ENCODE measurements at regions of chr11 and their contacts with region 1.

Region 1: DNA sequence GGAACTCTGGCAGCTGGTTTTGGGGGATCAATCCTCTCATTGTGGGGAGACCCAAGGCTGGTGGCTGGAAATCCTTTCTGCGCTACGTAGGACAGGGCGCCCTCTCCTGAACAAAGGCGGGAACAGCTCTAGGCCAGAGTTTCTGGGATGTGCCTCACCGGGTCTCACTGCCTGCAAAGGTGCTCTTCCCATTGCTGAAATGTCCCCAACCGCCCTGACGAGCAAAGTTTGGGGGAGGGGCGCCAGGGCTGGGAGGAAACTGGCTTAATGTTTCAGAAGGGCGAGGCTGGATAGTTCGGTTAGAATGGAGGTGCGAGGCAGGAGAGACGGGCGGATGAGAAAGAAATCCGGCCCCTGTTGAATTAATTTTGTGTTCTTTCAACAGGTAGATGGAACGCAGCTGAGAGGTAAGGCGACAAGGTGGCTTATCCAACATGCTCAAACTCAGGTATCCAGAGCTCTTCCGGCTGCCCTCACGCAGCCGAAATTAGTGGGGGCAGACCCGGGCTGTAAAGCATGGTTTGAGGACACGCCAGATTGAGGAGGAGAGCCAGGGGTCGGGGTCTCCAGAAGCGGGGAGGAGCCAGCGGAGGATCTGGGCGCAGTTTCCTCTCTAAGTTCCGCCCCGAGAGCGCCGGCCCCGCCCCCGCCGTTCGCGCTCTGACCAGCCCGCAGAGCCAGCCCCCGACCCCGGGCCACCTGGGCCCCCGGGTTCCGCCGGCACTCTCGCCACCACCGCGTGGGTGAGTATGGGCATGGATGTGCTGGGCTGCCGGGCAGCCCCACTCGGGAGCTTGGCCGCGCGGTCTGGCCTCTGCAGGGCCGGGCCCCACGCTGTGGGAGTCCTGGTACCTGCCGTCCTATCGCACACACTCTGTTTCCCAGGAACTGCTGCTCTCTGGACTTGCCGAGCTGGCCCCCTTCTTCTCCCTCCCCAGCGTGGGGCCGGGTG is at the start of gene PGAP2:
- DNase-seq: peak; percentile 77
- H3K4me3 Mint-ChIP-seq: peak within 1 kb of the TSS; percentile 81
- H3K27ac Mint-ChIP-seq: peak within 1 kb of the TSS; percentile 61
- H3K4me1 Mint-ChIP-seq: peaks cover 15% of the 10 kb centered on the region
- H3K27me3 Mint-ChIP-seq: no peaks in the 10 kb centered on the region
- CTCF ChIP-seq: peak; percentile 44
- total RNA-seq, gene PGAP2: 27.2 and 28.2 TPM in 2 replicates

Region 2: GRCh38 chr11:3723014-3723708 is 85.0 kb before region 1 on chr11:
- CTCF ChIA-PET with region 1: interaction called, 3 read pairs
- POLR2A ChIA-PET with region 1: interaction called, 4 read pairs
- intact Hi-C with region 1: loop called (anchors 5 kb)
- DNase-seq: peak; percentile 89
- H3K4me3 Mint-ChIP-seq: no peak overlapping the region
- H3K27ac Mint-ChIP-seq: peak overlapping the region; percentile 83
- H3K4me1 Mint-ChIP-seq: peaks cover 8% of the 10 kb centered on the region
- H3K27me3 Mint-ChIP-seq: no peaks in the 10 kb centered on the region
- CTCF ChIP-seq: no peak

Region 3: DNA sequence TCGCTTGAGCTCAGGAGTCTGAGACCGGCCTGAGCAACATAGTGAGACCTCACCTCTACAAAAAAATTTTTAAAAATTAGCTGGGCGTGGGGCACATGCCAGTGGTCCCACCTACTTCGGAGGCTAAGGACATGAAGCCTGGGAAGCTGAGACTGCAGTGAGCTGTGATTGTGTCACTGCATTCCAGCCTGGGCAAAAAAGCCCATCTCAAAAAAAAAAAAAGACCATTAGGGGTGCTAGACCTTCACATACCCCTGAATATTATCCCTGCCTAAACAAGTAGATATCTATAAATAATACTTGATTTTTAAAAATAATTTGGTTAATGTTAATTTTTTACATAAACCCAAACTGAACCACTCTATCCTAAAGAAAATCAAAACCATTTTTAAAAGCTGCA is 35.0 kb before region 1 on chr11:
- CTCF ChIA-PET with region 1: interaction called, 13 read pairs
- POLR2A ChIA-PET with region 1: no interaction called
- intact Hi-C with region 1: no loop called
- DNase-seq: no peak
- H3K4me3 Mint-ChIP-seq: no peak overlapping the region
- H3K27ac Mint-ChIP-seq: no peak overlapping the region
- H3K4me1 Mint-ChIP-seq: no peaks in the 10 kb centered on the region
- H3K27me3 Mint-ChIP-seq: no peaks in the 10 kb centered on the region
- CTCF ChIP-seq: no peak

Region 4: GRCh38 chr11:3824714-3825472 is 16.7 kb after region 1 on chr11:
- CTCF ChIA-PET with region 1: interaction called, 42 read pairs
- POLR2A ChIA-PET with region 1: interaction called, 10 read pairs
- intact Hi-C with region 1: no loop called
- DNase-seq: peak; percentile 43
- H3K4me3 Mint-ChIP-seq: no peak overlapping the region
- H3K27ac Mint-ChIP-seq: no peak overlapping the region
- H3K4me1 Mint-ChIP-seq: peaks cover 15% of the 10 kb centered on the region
- H3K27me3 Mint-ChIP-seq: no peaks in the 10 kb centered on the region
- CTCF ChIP-seq: peak; percentile 21

Region 5: DNA sequence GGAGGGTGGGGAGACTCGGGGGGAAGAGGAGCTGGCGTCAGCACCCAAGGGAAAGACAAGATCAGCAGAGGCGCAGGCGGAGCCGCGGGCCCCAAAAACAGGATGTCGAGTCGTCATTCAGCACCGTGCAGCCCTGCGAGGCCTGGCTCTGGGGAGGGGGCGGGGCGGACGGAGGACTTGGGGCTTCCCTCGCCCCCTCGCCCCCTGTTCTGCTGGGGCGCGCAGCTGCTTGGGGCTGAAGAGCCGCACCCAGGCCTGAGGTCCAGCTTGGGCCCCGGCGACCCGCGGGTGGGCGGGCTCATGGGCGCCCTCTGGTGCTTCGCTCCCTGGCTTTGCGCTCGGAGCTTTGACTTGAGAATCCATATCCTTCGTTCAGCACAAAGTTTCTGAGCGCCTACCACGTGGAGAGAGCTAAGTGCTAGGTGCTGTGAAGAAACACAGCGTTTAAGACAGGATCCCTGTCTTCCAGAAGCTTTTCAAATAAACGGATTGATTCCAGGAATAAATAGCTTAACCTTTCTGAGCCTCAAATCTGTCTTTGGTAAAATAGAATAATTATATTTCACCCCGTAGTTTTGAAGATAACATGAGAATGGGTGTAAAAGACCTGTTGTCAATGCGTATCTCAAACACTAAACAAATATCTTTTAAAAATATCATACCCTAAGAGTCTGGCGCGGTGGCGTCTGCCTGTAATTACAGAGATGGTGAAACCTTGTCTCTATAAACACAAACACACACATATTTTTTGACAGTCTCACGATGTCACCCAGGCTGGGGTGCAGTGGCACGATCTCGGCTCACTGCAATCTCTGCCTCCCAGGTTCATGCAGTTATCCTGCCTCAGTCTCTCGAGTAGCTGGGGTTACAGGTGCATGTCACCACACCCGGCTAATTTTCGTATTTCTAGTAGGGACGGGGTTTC is 33.5 kb after region 1 on chr11:
- CTCF ChIA-PET with region 1: interaction called, 15 read pairs
- POLR2A ChIA-PET with region 1: interaction called, 9 read pairs
- intact Hi-C with region 1: no loop called
- DNase-seq: peak; percentile 88
- H3K4me3 Mint-ChIP-seq: peak overlapping the region; percentile 80
- H3K27ac Mint-ChIP-seq: peak overlapping the region; percentile 62
- H3K4me1 Mint-ChIP-seq: peaks cover 22% of the 10 kb centered on the region
- H3K27me3 Mint-ChIP-seq: no peaks in the 10 kb centered on the region
- CTCF ChIP-seq: peak; percentile 71

Region 6: DNA sequence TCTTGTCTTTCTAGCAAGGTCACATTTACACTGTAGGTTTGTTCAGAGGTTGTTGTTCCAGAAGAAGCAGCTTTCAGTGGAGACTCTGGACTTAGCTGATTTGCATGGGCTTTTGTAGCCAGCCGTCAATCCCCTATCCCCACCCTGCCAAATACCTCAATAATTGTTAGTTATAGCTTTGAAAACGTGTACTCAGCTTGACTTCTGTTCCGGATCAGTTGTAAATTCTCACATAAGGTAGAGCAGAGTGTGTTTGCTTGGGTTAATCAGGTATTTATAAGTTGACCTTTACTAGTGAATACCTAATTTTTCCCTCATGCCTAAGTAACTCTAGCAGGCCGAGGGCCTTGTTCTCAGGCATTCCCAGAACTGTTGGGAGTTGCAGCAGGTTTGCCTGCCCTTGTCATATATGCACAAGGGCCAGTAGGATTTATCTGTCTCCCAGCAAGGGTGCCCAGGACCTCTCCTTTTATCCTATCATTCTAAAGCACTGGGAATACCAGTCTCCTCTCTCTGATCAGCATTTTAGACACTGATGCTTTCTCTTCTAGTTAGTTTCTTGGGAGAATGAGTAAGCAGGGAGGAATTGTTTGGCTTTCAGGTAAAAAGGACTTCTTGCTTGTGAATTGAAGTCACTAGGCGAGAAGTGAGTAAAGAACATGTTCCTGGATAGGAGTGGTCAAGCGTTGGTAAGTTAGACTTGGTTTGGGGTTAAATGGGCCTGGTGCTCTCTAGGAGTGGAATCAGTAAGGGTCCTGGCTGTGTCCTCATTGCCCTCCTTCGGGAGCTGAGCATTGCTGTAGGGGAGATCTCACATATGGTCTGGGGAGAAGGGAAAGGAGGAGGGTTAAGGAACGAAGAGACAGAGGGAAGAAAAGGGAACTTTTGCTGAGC is 69.4 kb after region 1 on chr11:
- CTCF ChIA-PET with region 1: no interaction called
- POLR2A ChIA-PET with region 1: no interaction called
- intact Hi-C with region 1: no loop called
- DNase-seq: no peak
- H3K4me3 Mint-ChIP-seq: no peak overlapping the region
- H3K27ac Mint-ChIP-seq: no peak overlapping the region
- H3K4me1 Mint-ChIP-seq: peaks cover 26% of the 10 kb centered on the region
- H3K27me3 Mint-ChIP-seq: no peaks in the 10 kb centered on the region
- CTCF ChIP-seq: no peak

Region 7: DNA sequence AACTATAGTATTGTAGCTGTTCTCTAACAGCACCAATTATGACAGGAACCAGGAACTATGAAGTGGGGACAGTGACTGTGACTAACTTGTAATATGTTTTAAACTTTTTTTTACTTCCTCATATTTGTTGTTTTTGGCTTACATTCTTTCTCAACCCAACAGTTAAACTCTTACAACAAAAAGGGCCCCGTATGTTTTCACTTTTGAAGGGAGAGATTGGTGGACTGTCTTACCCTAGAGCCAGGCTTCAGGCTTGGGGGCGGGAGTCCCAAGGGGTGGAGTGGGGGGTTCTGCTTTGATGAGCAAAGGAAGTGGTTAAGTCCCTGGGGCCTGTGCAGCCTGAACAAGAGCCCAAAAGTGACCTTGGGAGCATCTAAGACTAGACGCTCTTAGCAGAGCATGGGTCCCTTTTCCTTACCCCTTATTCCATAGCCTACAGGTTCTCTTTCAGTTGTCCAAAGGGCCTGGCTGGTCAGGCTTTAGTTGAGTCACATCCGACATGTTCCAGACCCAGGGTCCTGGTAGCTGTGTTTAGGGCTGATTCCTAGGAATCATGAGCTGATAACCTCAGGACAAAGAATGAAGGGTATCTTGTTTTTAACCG is 86.0 kb after region 1 on chr11:
- CTCF ChIA-PET with region 1: no interaction called
- POLR2A ChIA-PET with region 1: no interaction called
- intact Hi-C with region 1: no loop called
- DNase-seq: no peak
- H3K4me3 Mint-ChIP-seq: no peak overlapping the region
- H3K27ac Mint-ChIP-seq: no peak overlapping the region
- H3K4me1 Mint-ChIP-seq: no peaks in the 10 kb centered on the region
- H3K27me3 Mint-ChIP-seq: no peaks in the 10 kb centered on the region
- CTCF ChIP-seq: no peak

Measured in MCF 10A (cell line).